ENCODE measurements at regions of chr9 and their contacts with region 1.

Region 1: DNA sequence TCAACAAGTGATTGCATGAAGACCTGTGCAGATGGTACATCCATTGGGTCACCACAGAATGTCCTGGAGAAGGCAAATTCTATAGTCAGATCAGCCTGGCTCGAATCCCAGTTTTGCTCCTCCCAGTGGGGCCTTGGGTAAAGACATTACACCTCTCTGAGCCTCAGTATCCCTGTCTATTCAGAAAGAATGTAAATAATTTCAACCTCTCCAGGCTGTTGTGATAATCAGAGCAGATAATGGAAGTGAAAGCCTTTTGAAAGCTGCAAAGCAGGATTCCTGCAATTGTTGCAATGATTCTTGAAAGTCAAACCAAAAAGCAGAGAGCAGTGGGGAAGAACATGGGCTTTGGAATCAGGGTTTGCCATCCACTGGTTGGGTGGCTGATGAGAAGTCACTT is 63.2 kb downstream of the LHX2 start:
- DNase-seq: peak; percentile 16

Region 2: GRCh38 chr9:125961072-125961471 is 1886.3 kb after region 1 on chr9:
- intact Hi-C with region 1: loop called in 1 of 2 experiments (anchors 5 kb)
- DNase-seq: no peak